CD14-positive monocyte (primary cell): ENCODE measurements at regions of chr1 and their contacts with region 1.

Region 1: DNA sequence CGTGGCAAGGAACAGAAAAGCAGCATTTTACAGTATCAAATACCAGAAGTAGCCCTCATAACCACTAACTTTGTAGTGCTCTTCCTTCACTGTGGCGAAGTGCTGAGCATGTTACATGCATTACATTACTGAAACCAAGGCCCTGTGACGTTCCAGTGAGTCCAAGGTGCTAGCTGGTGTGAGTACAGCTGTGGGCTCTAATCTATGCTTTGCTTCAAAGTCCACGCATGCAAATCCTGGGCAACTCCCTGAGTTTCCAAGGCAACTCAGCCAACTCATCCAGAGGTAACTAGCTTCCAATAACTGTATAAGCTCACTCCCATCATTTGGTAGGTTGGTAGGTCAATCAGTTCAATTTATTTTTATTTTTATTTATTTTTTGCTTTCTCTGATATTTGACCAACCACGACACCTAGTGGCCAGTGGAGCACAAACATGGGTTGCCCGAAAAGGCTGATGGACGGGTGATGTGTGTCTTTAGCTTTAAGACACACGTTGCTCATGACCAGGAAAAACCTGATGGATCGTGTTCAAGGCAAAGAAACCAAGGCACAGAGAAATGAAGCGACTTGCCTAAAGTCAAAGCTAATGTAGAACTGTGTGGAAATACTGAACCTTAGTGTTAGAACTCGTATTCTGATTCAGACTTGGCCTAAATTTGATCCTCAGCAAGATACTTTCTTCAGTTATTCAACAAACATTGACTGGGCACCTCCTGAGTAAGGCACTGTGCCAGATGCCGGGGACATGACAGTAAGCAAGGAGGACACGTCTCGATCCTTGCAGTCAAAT is 73.0 kb downstream of the GNG12 start:
- DNase-seq: peak; percentile 32 to 53 (median 44)
- H3K4me3 ChIP-seq: no peak overlapping the region
- H3K4me3 Mint-ChIP-seq: no peak overlapping the region
- H3K27ac ChIP-seq: no peak overlapping the region
- H3K27ac Mint-ChIP-seq: peak overlapping the region in 1 of 7 donors; percentile 30
- H3K4me1 ChIP-seq: no peaks in the 10 kb centered on the region
- H3K4me1 Mint-ChIP-seq: no peaks in the 10 kb centered on the region
- H3K27me3 ChIP-seq: peaks cover 2 to 9% of the 10 kb centered on the region in 2 donors
- H3K27me3 Mint-ChIP-seq: peaks cover 2 to 10% (median 6%) of the 10 kb centered on the region in 3 donors
- CTCF ChIP-seq: peak; percentile 93

Region 2: DNA sequence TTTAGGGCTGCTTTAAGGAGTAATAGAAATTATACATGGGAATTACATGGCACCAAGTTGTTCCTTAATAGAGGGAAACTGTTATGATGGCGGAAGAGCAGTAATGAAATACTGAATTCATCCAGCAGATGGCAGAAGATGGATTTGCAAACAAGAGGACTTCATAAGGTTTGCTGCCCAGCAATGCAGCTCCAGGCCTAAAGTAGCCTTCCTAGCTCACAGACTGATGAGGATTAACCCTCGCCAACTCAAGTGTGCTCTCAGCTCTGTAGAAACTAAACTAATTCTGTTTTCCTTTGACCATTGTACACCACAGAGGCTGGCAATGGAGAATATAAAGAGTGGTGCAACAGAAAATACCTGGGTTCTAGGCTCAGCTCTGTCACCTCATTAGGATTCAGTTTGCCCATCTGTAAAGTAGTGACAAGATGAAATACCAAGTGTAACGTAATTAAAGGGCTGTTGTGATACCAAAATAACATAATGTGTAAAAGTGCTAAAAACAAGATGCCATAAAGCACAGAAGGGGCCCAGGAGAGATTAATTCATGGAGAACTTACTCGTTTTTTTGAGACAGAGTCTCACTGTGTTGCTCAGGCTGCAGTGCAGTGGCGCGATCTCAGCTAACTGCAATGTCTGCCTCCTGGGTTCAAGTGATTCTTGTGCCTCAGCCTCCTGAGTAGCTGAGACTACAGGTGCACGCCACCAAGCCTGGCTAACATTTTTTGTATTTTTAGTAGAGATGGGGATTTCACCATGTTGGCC is 227.6 kb before region 1 on chr1:
- intact Hi-C with region 1: loop called (anchors 2 kb)
- DNase-seq: peak; percentile 33 to 55 (median 41)
- H3K4me3 ChIP-seq: no peak overlapping the region
- H3K4me3 Mint-ChIP-seq: no peak overlapping the region
- H3K27ac ChIP-seq: no peak overlapping the region
- H3K27ac Mint-ChIP-seq: no peak overlapping the region
- H3K4me1 ChIP-seq: no peaks in the 10 kb centered on the region
- H3K4me1 Mint-ChIP-seq: no peaks in the 10 kb centered on the region
- H3K27me3 ChIP-seq: no peaks in the 10 kb centered on the region
- H3K27me3 Mint-ChIP-seq: no peaks in the 10 kb centered on the region
- CTCF ChIP-seq: peak; percentile 83

Region 3: DNA sequence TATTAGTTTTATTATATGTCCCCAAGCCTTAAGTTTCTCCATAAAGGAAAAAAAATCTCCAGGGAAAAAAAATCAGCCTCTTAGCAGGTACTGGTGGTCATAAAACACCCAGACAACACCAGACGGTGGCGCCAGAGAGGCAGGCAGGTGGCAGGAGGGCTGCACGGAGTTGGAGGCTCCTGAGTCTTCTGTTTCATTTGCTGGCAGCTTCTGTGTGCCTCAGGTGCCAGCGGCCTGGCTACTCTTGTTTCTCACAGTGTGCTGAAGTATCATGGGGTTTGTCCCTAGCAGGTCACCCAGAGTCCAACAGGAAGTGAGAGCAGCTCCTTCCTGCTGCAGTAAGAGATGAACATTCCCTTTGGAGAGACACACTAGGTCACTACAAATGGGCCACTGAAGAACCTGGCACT is 198.5 kb before region 1 on chr1:
- intact Hi-C with region 1: loop called in 1 of 2 experiments (anchors 10 kb)
- DNase-seq: peak; percentile 35 to 56 (median 44)
- H3K4me3 ChIP-seq: peak overlapping the region in 1 of 3 experiments; percentile 28
- H3K4me3 Mint-ChIP-seq: peak overlapping the region; percentile 10 to 53
- H3K27ac ChIP-seq: peak overlapping the region in 1 of 2 donors; percentile 49
- H3K27ac Mint-ChIP-seq: peak overlapping the region in 3 of 7 donors; percentile 30 to 63 (median 63)
- H3K4me1 ChIP-seq: peaks cover 36 to 43% of the 10 kb centered on the region in 2 donors
- H3K4me1 Mint-ChIP-seq: peaks cover 43% of the 10 kb centered on the region
- H3K27me3 ChIP-seq: no peaks in the 10 kb centered on the region
- H3K27me3 Mint-ChIP-seq: peaks cover 0 to 2% (median 0%) of the 10 kb centered on the region in 3 donors
- CTCF ChIP-seq: peak; percentile 83

Region 4: DNA sequence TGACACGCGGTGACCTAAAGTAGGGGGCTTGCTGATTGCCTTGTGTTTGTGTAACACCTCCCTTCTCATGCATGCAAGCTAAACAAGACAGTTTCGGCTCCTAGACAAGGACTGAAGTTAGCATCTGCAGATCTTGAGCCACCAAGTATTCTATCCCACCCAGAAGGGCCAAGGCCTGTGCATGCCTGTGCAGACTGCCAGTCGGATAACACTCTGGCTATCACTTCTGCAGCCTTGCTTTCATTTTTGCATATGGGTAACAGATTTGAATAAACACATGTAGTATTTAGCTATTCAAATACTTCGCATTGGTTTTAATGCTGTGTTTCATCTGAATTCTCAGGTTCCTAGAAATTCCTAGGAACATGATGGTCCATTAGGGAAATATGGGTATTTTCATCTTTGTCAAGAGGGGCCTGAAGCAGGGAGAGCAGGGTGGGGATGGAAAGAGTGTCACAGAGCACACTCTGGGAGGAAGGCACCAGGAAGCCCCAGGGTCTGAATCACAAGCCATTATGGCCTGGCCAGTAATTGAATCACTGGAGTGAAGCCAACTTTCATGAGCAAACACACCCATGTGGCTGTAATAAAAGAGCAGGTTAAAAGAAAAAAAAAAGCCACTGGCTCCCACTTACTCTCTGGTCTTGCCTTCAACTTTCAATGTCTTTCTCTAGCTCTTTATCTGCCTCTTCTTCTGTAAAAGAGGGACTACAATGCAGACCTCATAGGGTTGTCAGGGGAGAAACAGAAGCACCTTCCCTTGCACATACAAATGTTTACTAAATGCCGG is 47.0 kb before region 1 on chr1:
- intact Hi-C with region 1: no loop called
- DNase-seq: no peak
- H3K4me3 ChIP-seq: no peak overlapping the region
- H3K4me3 Mint-ChIP-seq: no peak overlapping the region
- H3K27ac ChIP-seq: no peak overlapping the region
- H3K27ac Mint-ChIP-seq: no peak overlapping the region
- H3K4me1 ChIP-seq: no peaks in the 10 kb centered on the region
- H3K4me1 Mint-ChIP-seq: peaks cover 6% of the 10 kb centered on the region
- H3K27me3 ChIP-seq: no peaks in the 10 kb centered on the region
- H3K27me3 Mint-ChIP-seq: no peaks in the 10 kb centered on the region
- CTCF ChIP-seq: no peak

Region 5: GRCh38 chr1:68074472-68074871 is 314.2 kb after region 1 on chr1:
- intact Hi-C with region 1: no loop called
- DNase-seq: no peak
- H3K4me3 ChIP-seq: no peak overlapping the region
- H3K4me3 Mint-ChIP-seq: no peak overlapping the region
- H3K27ac ChIP-seq: no peak overlapping the region
- H3K27ac Mint-ChIP-seq: no peak overlapping the region
- H3K4me1 ChIP-seq: no peaks in the 10 kb centered on the region
- H3K4me1 Mint-ChIP-seq: no peaks in the 10 kb centered on the region
- H3K27me3 ChIP-seq: no peaks in the 10 kb centered on the region
- H3K27me3 Mint-ChIP-seq: peaks cover 2 to 7% (median 7%) of the 10 kb centered on the region in 3 donors
- CTCF ChIP-seq: no peak